Gastrocnemius medialis (tissue), 4 donors: ENCODE measurements at regions of chr18 and their contacts with region 1.

Region 1: DNA sequence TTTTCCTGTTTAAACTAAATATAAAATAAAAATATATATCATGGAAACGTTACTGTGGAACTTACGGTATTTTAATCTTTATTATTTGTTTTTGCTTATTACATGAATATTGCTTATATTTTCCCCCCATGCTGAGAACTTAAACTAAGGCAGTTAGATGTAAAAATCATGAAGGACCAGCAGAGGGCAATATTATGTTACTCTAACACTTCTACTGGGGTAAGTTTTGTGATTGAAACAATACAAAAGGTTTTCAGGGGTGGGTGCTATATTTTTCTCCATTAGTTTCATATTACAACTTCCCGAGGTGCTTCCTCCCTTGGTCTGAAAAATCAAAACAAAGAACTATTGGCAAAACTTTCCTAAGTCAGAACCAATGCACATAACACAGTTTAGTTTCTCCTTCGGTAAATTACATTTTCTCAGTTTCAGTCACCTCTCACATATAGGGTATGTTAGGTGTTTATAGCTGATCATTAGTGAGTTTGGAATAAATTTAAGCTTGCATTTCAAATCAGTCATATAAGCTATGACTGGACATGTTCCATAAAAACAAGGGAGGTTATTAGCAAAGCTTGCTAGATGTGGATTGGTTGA is 54.8 kb downstream of the ZNF407 start:
- DNase-seq: no peak
- ATAC-seq: peak in 1 of 2 donors; percentile 55
- H3K4me3 ChIP-seq: no peak overlapping the region
- H3K27ac ChIP-seq: no peak overlapping the region
- H3K4me1 ChIP-seq: no peaks in the 10 kb centered on the region
- H3K27me3 ChIP-seq: no peaks in the 10 kb centered on the region
- CTCF ChIP-seq: peak; percentile 23 to 53 (median 42)
- POLR2A ChIP-seq: no peak

Region 2: DNA sequence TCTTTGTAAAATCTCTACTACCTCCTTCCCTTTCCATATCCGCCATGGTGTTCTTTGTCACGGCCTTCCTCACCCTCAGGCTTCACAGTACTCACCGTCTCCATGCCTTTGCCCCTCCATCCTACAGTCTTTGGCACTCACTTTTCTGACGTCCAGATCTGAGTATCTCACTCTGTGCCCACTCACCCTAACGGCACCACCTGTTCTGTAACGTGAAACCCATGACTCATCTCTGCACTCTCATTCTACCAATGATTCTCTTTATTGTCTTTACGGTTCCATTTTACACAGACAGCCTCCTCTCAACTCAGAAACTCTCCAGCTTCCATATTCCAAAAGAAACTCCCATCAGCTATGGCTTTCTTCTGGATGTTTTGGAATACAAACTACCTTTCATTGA is 1841.4 kb before region 1 on chr18:
- in situ Hi-C with region 1: no loop called
- intact Hi-C with region 1: no loop called
- DNase-seq: no peak
- ATAC-seq: no peak
- H3K4me3 ChIP-seq: no peak overlapping the region
- H3K27ac ChIP-seq: no peak overlapping the region
- H3K4me1 ChIP-seq: no peaks in the 10 kb centered on the region
- H3K27me3 ChIP-seq: no peaks in the 10 kb centered on the region
- CTCF ChIP-seq: no peak
- POLR2A ChIP-seq: no peak

Region 3: GRCh38 chr18:74702950-74703349 is 50.5 kb after region 1 on chr18:
- in situ Hi-C with region 1: no loop called
- intact Hi-C with region 1: no loop called
- DNase-seq: no peak
- ATAC-seq: no peak
- H3K4me3 ChIP-seq: no peak overlapping the region
- H3K27ac ChIP-seq: no peak overlapping the region
- H3K4me1 ChIP-seq: peaks cover 0 to 4% of the 10 kb centered on the region in 2 donors
- H3K27me3 ChIP-seq: no peaks in the 10 kb centered on the region
- CTCF ChIP-seq: no peak
- POLR2A ChIP-seq: no peak

Region 4: DNA sequence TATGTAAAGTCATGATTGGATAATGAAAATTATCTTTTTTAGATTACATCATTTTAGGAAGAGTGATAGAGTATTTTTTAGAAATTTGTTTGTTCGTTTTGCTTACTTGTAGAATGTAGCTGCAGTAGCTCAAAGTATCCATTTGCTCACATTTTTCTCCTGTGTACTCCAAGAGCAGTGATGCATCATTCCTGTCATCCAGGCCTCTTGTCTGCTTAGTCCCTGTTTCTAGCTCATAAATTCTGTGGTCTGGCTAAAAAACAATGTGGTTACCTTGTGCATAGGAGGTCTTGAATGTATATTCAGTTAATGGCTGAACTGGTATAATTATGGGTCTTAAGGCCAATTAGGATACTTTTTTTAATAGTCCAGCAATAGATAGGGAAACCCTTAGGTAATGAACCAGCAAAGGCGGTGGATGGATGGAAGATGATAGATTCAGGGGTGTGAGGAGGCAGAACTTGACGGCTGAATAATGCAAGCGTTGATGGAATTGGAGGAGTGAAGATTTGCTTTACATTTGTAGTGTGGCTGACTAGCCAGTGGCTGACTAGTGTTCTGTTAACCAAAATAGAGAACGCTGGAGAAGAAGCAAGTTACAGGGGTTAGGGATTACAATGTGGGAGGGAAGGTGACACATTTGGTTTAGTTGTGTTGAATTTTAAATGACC is 90.2 kb after region 1 on chr18:
- in situ Hi-C with region 1: no loop called
- intact Hi-C with region 1: no loop called
- DNase-seq: no peak
- ATAC-seq: no peak
- H3K4me3 ChIP-seq: no peak overlapping the region
- H3K27ac ChIP-seq: no peak overlapping the region
- H3K4me1 ChIP-seq: no peaks in the 10 kb centered on the region
- H3K27me3 ChIP-seq: no peaks in the 10 kb centered on the region
- CTCF ChIP-seq: no peak
- POLR2A ChIP-seq: no peak

Region 5: DNA sequence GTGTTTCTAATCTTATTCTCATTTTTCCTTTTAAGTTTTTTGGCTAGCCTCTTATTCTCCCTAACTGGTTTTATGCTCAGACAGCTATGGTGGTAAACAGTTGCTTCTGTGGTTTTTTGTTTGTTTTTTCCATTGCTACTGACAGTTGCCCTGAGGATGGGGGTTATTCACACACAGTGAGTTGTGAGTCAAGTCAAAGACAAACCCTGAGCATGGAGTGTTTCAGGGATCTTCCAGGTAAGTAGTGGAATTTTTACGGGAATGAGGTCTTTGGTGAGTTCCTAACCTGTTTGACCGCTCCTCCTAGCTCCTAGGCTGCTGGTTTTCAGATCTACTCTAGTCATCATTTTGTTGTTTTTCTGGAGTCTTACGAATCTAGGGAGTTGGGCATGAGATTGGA is 108.0 kb after region 1 on chr18:
- in situ Hi-C with region 1: no loop called
- intact Hi-C with region 1: no loop called
- DNase-seq: no peak
- ATAC-seq: no peak
- H3K4me3 ChIP-seq: no peak overlapping the region
- H3K27ac ChIP-seq: no peak overlapping the region
- H3K4me1 ChIP-seq: no peaks in the 10 kb centered on the region
- H3K27me3 ChIP-seq: no peaks in the 10 kb centered on the region
- CTCF ChIP-seq: no peak
- POLR2A ChIP-seq: no peak

Region 6: GRCh38 chr18:75489493-75490190 is 837.2 kb after region 1 on chr18:
- in situ Hi-C with region 1: loop called in 2 of 4 experiments (anchors 10 to 25 kb)
- intact Hi-C with region 1: no loop called
- DNase-seq: no peak
- ATAC-seq: no peak
- H3K4me3 ChIP-seq: no peak overlapping the region
- H3K27ac ChIP-seq: no peak overlapping the region
- H3K4me1 ChIP-seq: no peaks in the 10 kb centered on the region
- H3K27me3 ChIP-seq: no peaks in the 10 kb centered on the region
- CTCF ChIP-seq: no peak
- POLR2A ChIP-seq: no peak